Aorta (tissue), 5 donors: ENCODE measurements at regions of chr10 and their contacts with region 1.

Region 1: GRCh38 chr10:98790802-98791201 is 344.1 kb upstream of the HPS1 start:
- DNase-seq: no peak
- ATAC-seq: no peak
- H3K4me3 ChIP-seq: no peak overlapping the region
- H3K27ac ChIP-seq: no peak overlapping the region
- H3K4me1 ChIP-seq: no peaks in the 10 kb centered on the region
- H3K27me3 ChIP-seq: no peaks in the 10 kb centered on the region

Region 2: DNA sequence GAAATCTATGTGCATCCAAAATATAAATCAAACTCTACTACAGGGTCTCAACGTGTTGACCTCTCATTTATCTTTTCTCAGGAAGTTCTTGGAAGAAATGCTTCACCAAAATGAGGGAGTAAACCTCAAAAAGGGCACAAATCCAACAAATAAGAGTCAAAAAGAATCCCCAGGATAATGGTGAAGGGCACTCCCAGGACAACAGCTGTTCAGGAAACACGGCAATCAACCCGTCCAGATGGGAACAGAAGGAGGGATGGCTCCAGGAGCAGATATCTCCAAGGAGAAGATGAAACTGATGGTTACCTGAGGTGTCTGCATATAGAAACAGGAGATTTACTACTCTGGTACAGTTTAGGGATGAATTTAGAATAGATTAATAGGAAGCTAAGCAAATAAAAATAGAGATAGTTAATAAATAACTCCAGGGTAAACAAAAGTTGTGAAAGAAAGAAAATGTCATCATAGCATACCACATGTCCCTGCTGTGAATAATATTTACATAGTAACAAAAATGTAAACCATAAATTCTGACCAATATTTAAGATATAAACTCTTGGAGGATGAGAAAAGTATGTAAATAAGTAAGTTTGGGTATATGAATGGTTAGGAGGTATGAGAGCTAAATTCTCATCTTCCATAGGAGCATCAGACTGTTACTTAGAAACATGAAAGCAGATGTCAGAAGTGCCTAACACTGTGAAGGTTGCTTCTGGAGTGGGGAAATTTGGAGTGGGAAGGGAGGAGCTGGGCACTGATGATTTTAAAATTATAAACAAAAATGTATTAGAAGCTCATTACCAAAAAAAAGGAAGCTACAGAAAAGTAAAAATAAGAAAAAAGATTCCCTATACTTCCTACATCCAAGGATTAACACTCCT is 106.5 kb before region 1 on chr10:
- intact Hi-C with region 1: no loop called
- DNase-seq: no peak
- ATAC-seq: no peak
- H3K4me3 ChIP-seq: no peak overlapping the region
- H3K27ac ChIP-seq: no peak overlapping the region
- H3K4me1 ChIP-seq: no peaks in the 10 kb centered on the region
- H3K27me3 ChIP-seq: no peaks in the 10 kb centered on the region

Region 3: GRCh38 chr10:99172130-99172738 is 381.4 kb after region 1 on chr10:
- intact Hi-C with region 1: loop called (anchors 5 kb)
- DNase-seq: peak in 1 of 2 donors; percentile 50
- ATAC-seq: no peak
- H3K4me3 ChIP-seq: no peak overlapping the region
- H3K27ac ChIP-seq: no peak overlapping the region
- H3K4me1 ChIP-seq: no peaks in the 10 kb centered on the region
- H3K27me3 ChIP-seq: no peaks in the 10 kb centered on the region

Region 4: GRCh38 chr10:99248824-99249223 is 458.0 kb after region 1 on chr10:
- intact Hi-C with region 1: loop called (anchors 5 to 10 kb)
- DNase-seq: no peak
- ATAC-seq: no peak
- H3K4me3 ChIP-seq: no peak overlapping the region
- H3K27ac ChIP-seq: no peak overlapping the region
- H3K4me1 ChIP-seq: no peaks in the 10 kb centered on the region
- H3K27me3 ChIP-seq: no peaks in the 10 kb centered on the region